CD8-positive, alpha-beta memory T cell (primary cell): ENCODE measurements at regions of chr7 and their contacts with region 1.

Region 1: GRCh38 chr7:6106140-6106904 is 75.1 kb downstream of the ANKRD61 start:
- DNase-seq: peak; percentile 17 to 60 (median 41)
- H3K4me3 ChIP-seq: peak overlapping the region; percentile 78
- H3K4me3 Mint-ChIP-seq: peak overlapping the region; percentile 90 to 97 (median 93)
- H3K27ac ChIP-seq: peak overlapping the region; percentile 86
- H3K27ac Mint-ChIP-seq: peak overlapping the region; percentile 94 to 99 (median 97)
- H3K4me1 ChIP-seq: peaks cover 14% of the 10 kb centered on the region
- H3K4me1 Mint-ChIP-seq: peaks cover 35 to 55% (median 41%) of the 10 kb centered on the region in 3 donors
- H3K27me3 ChIP-seq: no peaks in the 10 kb centered on the region
- H3K27me3 Mint-ChIP-seq: peaks cover 0 to 2% of the 10 kb centered on the region in 2 donors

Region 2: DNA sequence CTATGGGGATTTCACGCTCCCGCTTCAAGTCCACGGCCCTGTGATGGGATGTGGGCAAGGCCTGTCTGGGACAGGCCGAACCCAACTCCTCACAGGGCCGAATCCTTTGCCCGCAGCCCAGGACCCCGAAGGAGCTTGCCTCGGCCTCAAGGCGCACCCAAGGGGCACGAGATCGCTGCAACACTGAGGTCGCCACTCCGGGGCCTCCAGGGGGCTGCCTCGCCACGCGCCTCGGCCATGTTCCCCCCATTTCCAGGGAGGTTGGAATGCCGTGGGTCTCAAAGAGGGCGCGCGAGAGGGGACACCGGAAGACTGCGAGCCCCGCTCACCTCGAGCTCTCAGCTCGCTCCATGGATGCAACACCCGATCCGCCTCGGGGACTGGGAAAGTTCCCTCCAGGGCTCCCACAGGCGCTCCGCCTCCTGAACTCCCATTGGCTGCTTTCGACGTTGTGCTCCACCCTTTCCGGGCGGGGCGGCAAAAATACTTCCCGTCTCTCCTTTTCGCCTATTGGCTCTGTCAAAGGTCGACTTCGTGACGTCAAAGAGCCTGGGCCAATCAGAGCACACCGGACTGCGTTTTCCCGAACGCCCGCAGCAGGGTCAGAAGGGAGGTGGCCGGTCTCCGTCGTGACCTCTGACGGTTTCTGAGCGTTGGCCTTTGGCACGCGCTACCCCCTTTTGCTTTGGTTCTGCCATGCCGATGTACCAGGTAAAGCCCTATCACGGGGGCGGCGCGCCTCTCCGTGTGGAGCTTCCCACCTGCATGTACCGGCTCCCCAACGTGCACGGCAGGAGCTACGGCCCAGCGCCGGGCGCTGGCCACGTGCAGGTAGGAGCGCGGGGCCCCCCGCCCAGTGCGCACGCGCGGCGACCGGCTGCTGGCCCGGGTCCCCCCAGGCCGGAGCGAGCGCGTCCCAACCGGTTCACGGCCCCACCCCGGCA is 97.4 kb before region 1 on chr7 and contains the starts of genes AIMP2 and PMS2:
- CTCF ChIA-PET with region 1: interaction called, 14 read pairs
- POLR2A ChIA-PET with region 1: no interaction called
- DNase-seq: peak; percentile 93 to 96 (median 94)
- H3K4me3 ChIP-seq: peak within 1 kb of the TSS; percentile 88
- H3K4me3 Mint-ChIP-seq: peak within 1 kb of the TSS; percentile 91 to 98 (median 94)
- H3K27ac ChIP-seq: peak within 1 kb of the TSS; percentile 88
- H3K27ac Mint-ChIP-seq: peak within 1 kb of the TSS; percentile 88 to 97 (median 96)
- H3K4me1 ChIP-seq: peaks cover 6% of the 10 kb centered on the region
- H3K4me1 Mint-ChIP-seq: peaks cover 31 to 54% (median 43%) of the 10 kb centered on the region in 3 donors
- H3K27me3 ChIP-seq: no peaks in the 10 kb centered on the region
- H3K27me3 Mint-ChIP-seq: no peaks in the 10 kb centered on the region
- total RNA-seq, gene AIMP2: 80.0 to 82.5 TPM
- total RNA-seq, gene PMS2: 22.6 to 26.0 TPM

Region 3: GRCh38 chr7:6323967-6324701 is 217.8 kb after region 1 on chr7:
- CTCF ChIA-PET with region 1: interaction called, 10 read pairs
- POLR2A ChIA-PET with region 1: no interaction called
- DNase-seq: no peak
- H3K4me3 ChIP-seq: no peak overlapping the region
- H3K4me3 Mint-ChIP-seq: no peak overlapping the region
- H3K27ac ChIP-seq: no peak overlapping the region
- H3K27ac Mint-ChIP-seq: peak overlapping the region in 1 of 8 donors; percentile 66
- H3K4me1 ChIP-seq: no peaks in the 10 kb centered on the region
- H3K4me1 Mint-ChIP-seq: peaks cover 4 to 5% (median 4%) of the 10 kb centered on the region in 3 donors
- H3K27me3 ChIP-seq: no peaks in the 10 kb centered on the region
- H3K27me3 Mint-ChIP-seq: peaks cover 0 to 8% of the 10 kb centered on the region in 2 donors